ENCODE measurements at regions of chr6 and their contacts with region 1.

Region 1: DNA sequence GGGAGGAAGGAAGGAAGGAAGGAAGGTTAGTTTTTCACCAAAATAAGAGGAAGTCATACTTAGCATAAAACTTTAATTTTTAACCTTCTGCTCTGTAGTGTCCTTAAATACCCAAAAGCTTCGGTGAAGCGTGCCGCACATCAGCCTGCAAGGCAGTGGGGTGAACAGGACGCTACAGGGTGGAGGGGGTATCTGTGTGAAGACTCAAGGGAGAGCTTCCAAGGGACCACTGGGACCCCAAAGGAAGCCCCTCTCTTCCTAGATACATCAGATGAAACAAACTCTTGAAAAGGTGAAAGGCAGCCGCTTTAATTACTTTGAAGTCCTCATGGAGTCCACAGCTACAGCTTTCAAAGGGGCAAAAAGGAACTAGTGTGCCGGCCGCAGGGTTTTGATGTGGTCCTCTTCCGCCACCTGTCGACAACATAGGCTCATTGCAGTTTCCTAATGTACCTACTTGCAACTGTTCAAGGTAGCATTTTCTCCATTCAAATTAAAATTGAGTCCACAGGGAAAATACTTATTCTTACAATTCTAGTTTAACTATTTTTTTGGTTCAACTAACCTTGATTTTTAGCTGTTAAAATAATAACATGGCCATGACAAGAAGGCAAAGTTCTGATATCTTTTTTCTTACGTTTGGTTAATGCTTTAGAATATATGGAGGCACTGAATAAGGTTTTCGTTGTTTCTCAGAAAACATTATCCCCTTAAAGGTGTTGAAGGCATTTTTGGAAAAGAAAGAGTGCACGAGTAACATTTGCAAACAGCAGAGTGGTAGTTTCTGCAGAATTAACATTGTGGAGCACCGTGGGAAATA is 135.0 kb upstream of the RIPOR2 start:
- DNase-seq: peak; percentile 81
- H3K4me3 ChIP-seq: no peak overlapping the region
- H3K27ac ChIP-seq: no peak overlapping the region
- H3K4me1 ChIP-seq: no peaks in the 10 kb centered on the region
- H3K27me3 ChIP-seq: no peaks in the 10 kb centered on the region
- CTCF ChIP-seq: peak; percentile 79 to 89
- POLR2A ChIP-seq: no peak

Region 2: DNA sequence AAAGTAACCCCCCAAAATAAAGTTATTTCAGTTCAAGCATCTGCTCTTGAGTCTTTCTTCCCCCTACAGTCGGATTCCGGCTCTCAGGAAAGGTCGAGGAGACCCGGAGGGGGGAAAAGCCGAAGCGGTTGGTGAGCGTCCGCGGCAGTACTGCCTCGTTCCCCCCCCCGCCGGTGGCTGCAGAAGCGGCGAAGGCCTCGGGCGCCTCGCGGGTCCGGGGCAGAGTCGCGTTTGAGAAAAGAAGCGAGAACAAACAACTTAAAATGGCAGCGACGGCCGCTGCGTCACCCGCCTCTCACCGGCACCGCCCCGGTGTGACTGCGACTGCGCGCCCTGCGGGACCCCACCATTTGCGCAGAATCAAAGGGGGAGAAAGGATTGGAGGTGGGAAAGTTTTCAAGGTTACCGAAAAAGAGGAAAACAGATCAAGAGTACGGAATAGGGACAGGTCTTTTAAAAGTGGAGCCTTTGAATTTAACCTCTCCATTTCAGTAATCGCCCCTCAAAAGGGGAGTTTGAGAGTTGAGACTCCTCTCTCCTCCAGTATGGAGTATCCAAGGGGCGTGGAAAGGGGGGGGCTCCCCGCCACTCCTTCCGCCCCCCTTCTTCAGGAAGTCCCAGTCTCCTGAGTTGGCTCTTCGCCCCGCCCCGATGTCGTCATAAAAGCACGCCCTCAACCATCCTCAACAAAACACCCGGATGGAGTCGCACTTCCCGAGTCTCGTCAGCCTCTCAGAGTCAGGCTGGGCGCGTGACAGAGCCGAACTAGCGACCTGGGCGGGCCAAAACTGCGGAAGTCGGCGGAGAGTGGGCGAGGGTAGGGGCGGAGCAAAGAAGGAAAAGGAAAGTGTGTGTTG is 349.9 kb before region 1 on chr6:
- CTCF ChIA-PET with region 1: interaction called, 5 read pairs
- POLR2A ChIA-PET with region 1: interaction called, 3 read pairs
- dilution Hi-C with region 1: no loop called
- intact Hi-C with region 1: loop called (anchors 5 kb)
- DNase-seq: peak; percentile 100
- H3K4me3 ChIP-seq: peak overlapping the region; percentile 81 to 89 (median 86)
- H3K27ac ChIP-seq: peak overlapping the region; percentile 97
- H3K4me1 ChIP-seq: peaks cover 34% of the 10 kb centered on the region
- H3K27me3 ChIP-seq: no peaks in the 10 kb centered on the region
- CTCF ChIP-seq: no peak
- POLR2A ChIP-seq: peak; percentile 98

Region 3: GRCh38 chr6:24855395-24856245 is 215.1 kb before region 1 on chr6:
- CTCF ChIA-PET with region 1: interaction called, 131 read pairs
- POLR2A ChIA-PET with region 1: no interaction called
- dilution Hi-C with region 1: no loop called
- intact Hi-C with region 1: loop called (anchors 1 kb)
- DNase-seq: peak; percentile 70
- H3K4me3 ChIP-seq: no peak overlapping the region
- H3K27ac ChIP-seq: no peak overlapping the region
- H3K4me1 ChIP-seq: no peaks in the 10 kb centered on the region
- H3K27me3 ChIP-seq: no peaks in the 10 kb centered on the region
- CTCF ChIP-seq: peak; percentile 74 to 76
- POLR2A ChIP-seq: no peak

Region 4: GRCh38 chr6:25053875-25054371 is 16.8 kb before region 1 on chr6:
- CTCF ChIA-PET with region 1: interaction called, 15 read pairs
- POLR2A ChIA-PET with region 1: no interaction called
- dilution Hi-C with region 1: no loop called
- intact Hi-C with region 1: no loop called
- DNase-seq: peak; percentile 27
- H3K4me3 ChIP-seq: no peak overlapping the region
- H3K27ac ChIP-seq: no peak overlapping the region
- H3K4me1 ChIP-seq: peaks cover 17% of the 10 kb centered on the region
- H3K27me3 ChIP-seq: no peaks in the 10 kb centered on the region
- CTCF ChIP-seq: no peak
- POLR2A ChIP-seq: no peak

Region 5: GRCh38 chr6:25223490-25223991 is 152.8 kb after region 1 on chr6:
- CTCF ChIA-PET with region 1: no interaction called
- POLR2A ChIA-PET with region 1: no interaction called
- dilution Hi-C with region 1: no loop called
- intact Hi-C with region 1: loop called (anchors 1 kb)
- DNase-seq: peak; percentile 81
- H3K4me3 ChIP-seq: peak overlapping the region in 1 of 3 experiments; percentile 20
- H3K27ac ChIP-seq: no peak overlapping the region
- H3K4me1 ChIP-seq: peaks cover 6% of the 10 kb centered on the region
- H3K27me3 ChIP-seq: no peaks in the 10 kb centered on the region
- CTCF ChIP-seq: peak; percentile 68 to 72
- POLR2A ChIP-seq: no peak

Measured in endothelial cell of umbilical vein (primary cell).